MCF 10A (cell line): ENCODE measurements at regions of chr9 and their contacts with region 1.

Region 1: GRCh38 chr9:99819856-99820684 is 1.6 kb upstream of the NR4A3 start:
- DNase-seq: peak; percentile 90
- H3K4me3 Mint-ChIP-seq: peak overlapping the region; percentile 93
- H3K27ac Mint-ChIP-seq: peak overlapping the region; percentile 89
- H3K4me1 Mint-ChIP-seq: peaks cover 25% of the 10 kb centered on the region
- H3K27me3 Mint-ChIP-seq: peaks cover 15% of the 10 kb centered on the region
- CTCF ChIP-seq: no peak

Region 2: DNA sequence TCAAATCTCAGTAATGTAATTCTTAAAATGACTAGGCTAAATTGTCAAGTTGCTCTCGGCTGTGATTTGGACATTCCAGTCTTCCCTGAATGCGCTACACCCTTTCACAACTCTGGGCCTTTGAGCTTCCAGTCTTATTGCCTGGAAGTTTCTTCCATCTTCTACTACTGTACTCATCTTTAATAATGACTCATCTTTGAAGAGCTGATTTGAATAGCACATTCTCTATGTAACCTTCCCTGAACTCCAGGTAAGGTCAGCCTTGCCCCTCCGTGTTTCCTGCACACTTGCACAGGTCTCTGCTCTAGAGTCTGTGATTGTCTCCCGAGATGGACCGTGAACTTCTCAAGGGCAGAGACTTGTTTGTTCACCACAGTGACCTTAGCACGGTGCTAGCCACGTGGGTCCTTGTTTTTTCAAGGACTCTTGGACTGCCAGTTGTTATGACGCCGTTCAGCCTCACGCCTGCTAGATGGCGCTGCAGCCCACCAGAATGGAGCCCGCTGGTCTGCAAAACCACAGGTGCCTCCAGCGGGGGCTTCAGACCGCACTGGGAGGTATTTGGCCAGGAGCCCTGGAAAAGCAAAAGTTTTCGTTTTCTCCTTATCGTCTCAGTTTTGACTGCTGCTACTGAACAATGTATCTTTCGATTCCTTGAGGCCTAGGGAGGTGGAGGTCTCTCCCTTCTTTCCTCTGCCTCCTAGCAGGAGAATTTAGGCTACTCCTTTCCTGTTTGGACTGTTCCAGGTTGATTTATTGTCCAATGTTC is 553.6 kb before region 1 on chr9:
- CTCF ChIA-PET with region 1: interaction called, 8 read pairs
- POLR2A ChIA-PET with region 1: interaction called, 3 read pairs
- intact Hi-C with region 1: loop called (anchors 5 kb)
- DNase-seq: peak; percentile 72
- H3K4me3 Mint-ChIP-seq: peak overlapping the region; percentile 37
- H3K27ac Mint-ChIP-seq: no peak overlapping the region
- H3K4me1 Mint-ChIP-seq: peaks cover 19% of the 10 kb centered on the region
- H3K27me3 Mint-ChIP-seq: peaks cover 16% of the 10 kb centered on the region
- CTCF ChIP-seq: peak; percentile 83

Region 3: GRCh38 chr9:99336005-99336404 is 484.1 kb before region 1 on chr9:
- CTCF ChIA-PET with region 1: no interaction called
- POLR2A ChIA-PET with region 1: no interaction called
- intact Hi-C with region 1: no loop called
- DNase-seq: no peak
- H3K4me3 Mint-ChIP-seq: no peak overlapping the region
- H3K27ac Mint-ChIP-seq: no peak overlapping the region
- H3K4me1 Mint-ChIP-seq: no peaks in the 10 kb centered on the region
- H3K27me3 Mint-ChIP-seq: no peaks in the 10 kb centered on the region
- CTCF ChIP-seq: no peak

Region 4: GRCh38 chr9:99873531-99873930 is 53.5 kb after region 1 on chr9:
- CTCF ChIA-PET with region 1: no interaction called
- POLR2A ChIA-PET with region 1: interaction called, 3 read pairs
- intact Hi-C with region 1: loop called (anchors 1 kb)
- DNase-seq: peak; percentile 73
- H3K4me3 Mint-ChIP-seq: no peak overlapping the region
- H3K27ac Mint-ChIP-seq: no peak overlapping the region
- H3K4me1 Mint-ChIP-seq: peaks cover 6% of the 10 kb centered on the region
- H3K27me3 Mint-ChIP-seq: peaks cover 59% of the 10 kb centered on the region
- CTCF ChIP-seq: no peak

Region 5: GRCh38 chr9:99966720-99967119 is 146.7 kb after region 1 on chr9:
- CTCF ChIA-PET with region 1: no interaction called
- POLR2A ChIA-PET with region 1: no interaction called
- intact Hi-C with region 1: loop called (anchors 10 kb)
- DNase-seq: peak; percentile 71
- H3K4me3 Mint-ChIP-seq: no peak overlapping the region
- H3K27ac Mint-ChIP-seq: no peak overlapping the region
- H3K4me1 Mint-ChIP-seq: peaks cover 12% of the 10 kb centered on the region
- H3K27me3 Mint-ChIP-seq: no peaks in the 10 kb centered on the region
- CTCF ChIP-seq: no peak

Region 6: DNA sequence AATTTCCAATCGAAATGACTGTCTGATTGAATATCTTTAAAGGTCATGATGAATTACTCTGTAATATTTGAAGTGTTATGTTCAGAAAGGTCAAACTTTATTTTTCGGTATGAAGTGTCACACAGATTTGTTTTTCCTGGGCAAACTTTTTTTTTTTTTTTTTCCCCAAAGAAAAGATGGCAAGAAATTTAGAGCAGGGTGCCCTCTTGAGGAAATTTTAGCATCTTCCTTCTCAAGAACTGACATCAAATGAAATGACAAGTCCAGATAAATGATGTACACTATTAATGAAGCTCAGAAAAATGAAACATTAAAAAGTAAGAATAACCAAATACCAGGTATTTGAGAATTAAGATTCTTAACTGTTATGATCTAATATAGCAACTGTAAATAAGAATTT is 402.6 kb after region 1 on chr9:
- CTCF ChIA-PET with region 1: interaction called, 3 read pairs
- POLR2A ChIA-PET with region 1: no interaction called
- intact Hi-C with region 1: loop called (anchors 5 kb)
- DNase-seq: peak; percentile 33
- H3K4me3 Mint-ChIP-seq: no peak overlapping the region
- H3K27ac Mint-ChIP-seq: no peak overlapping the region
- H3K4me1 Mint-ChIP-seq: no peaks in the 10 kb centered on the region
- H3K27me3 Mint-ChIP-seq: no peaks in the 10 kb centered on the region
- CTCF ChIP-seq: peak; percentile 48

Region 7: DNA sequence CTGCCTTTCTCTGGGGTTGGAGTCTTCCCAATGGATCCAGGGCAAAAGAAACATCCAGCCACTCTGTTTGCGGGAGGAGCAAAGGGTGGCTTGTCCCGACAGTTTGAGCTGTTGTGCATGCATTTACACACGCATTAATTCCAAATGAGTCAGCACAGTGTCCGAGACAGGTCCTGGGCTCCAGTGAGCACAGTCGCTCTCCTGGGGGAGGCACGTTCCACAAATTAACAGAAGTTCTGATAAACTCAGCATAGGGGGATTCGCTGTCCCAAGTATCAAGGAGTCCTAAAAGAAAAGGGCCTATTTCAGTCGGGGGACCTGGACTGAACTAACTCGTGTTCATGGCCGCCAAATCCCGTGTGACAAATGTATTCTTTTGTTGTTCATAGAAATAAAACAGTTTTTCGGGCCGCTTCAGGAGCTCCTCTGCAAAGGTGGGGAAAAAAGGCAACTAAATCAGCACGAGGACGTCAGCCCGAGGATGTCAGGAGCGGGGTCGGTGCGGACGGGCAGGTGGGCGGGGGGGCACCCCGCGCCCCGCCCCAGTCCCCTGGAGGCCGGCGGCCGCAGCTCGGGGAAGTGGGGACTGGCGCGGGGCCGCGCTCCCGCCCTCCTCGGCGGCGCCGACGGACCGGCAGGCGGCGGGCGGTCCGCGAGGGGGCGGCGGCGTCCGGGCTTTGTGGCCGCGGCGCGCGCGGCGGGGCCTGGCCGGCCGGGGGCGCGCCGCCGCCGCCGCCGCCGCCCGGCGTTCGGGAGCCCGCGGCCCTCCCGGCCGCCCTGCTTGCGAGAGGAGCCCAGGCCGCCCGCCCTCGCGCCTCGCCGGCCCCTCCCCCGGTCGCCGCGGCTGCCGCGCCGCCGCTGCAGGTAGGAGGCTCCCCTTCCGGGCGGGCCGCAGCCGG is 606.7 kb after region 1 on chr9 and contains the start of gene MSANTD3:
- CTCF ChIA-PET with region 1: no interaction called
- POLR2A ChIA-PET with region 1: interaction called, 3 read pairs
- intact Hi-C with region 1: loop called (anchors 5 kb)
- DNase-seq: peak; percentile 67
- H3K4me3 Mint-ChIP-seq: peak within 1 kb of the TSS; percentile 97
- H3K27ac Mint-ChIP-seq: peak within 1 kb of the TSS; percentile 98
- H3K4me1 Mint-ChIP-seq: peaks cover 45% of the 10 kb centered on the region
- H3K27me3 Mint-ChIP-seq: no peaks in the 10 kb centered on the region
- CTCF ChIP-seq: no peak
- total RNA-seq, gene MSANTD3: 41.3 and 56.3 TPM in 2 replicates